ENCODE measurements at regions of chr6 and their contacts with region 1.

Region 1: GRCh38 chr6:30616811-30617564 is at the start of gene PPP1R10:
- DNase-seq: peak; percentile 100
- H3K4me3 ChIP-seq: peak within 1 kb of the TSS; percentile 70 to 99 (median 90)
- H3K27ac ChIP-seq: peak within 1 kb of the TSS; percentile 99
- H3K4me1 ChIP-seq: peaks cover 27% of the 10 kb centered on the region
- H3K27me3 ChIP-seq: no peaks in the 10 kb centered on the region
- CTCF ChIP-seq: no peak
- total RNA-seq, gene PPP1R10: 60.7 to 124 TPM

Region 2: DNA sequence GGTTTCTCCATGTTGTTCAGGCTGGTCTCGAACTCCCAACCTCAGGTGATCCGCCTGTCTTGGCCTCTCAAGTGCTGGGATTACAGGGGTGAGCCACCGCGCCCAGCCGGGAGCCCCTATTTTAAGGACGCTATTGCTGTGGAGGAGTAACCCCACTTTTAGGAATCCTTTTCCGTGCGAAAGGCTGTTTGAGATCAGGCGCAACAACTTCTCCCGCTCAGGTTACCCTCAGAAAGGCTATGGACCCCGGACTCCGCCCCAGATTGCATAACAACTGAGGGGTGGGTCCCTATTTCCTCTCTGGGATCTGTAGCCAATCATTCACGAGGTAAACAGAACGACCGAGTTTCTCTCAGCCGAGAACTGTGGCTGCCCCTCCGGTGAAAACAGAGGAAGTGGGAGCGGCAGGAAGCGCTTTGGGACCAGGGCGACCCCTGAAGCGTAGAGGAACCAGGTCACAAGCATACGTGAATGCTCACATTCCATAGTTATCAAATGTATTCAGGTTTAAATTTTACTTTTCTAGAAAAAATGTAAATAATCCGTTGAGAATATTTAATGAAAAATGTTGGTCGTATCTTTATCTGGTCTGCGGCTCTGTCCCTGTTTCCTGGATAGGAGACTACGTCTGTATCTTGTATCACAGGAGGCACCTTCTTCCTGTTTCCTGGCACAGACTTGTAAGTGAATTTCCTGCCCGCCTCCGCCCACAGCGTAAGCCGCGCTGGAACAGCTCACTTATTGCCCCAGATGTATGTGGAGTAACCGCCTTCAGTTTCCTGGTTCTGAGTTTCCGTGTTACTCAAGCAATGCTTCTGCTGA is 100.8 kb before region 1 on chr6:
- CTCF ChIA-PET with region 1: no interaction called
- dilution Hi-C with region 1: loop called (anchors 5 kb)
- in situ Hi-C with region 1: no loop called
- intact Hi-C with region 1: no loop called
- DNase-seq: peak; percentile 91
- H3K4me3 ChIP-seq: peak overlapping the region; percentile 48 to 70 (median 48)
- H3K27ac ChIP-seq: peak overlapping the region; percentile 99
- H3K4me1 ChIP-seq: peaks cover 19% of the 10 kb centered on the region
- H3K27me3 ChIP-seq: no peaks in the 10 kb centered on the region
- CTCF ChIP-seq: no peak

Region 3: DNA sequence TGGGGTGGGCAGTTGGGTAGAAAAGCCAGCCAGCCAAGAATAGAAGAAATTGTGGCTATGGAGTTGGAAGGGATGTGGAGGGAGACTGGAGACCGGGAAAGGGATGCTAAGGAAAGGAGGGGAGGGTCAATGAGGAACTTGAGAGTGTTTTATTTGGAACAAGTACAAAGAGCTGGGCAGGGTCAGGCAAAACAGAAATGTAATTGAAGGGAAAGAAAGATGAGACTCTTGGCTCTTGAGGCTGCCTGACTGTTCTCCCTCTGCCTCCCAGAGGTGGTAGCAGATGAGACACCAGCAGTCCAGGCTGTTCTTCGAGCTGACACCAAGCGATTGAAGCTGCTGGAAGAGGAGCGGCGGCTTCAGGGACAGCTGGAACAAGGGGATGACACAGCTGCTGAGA is 33.1 kb before region 1 on chr6:
- CTCF ChIA-PET with region 1: no interaction called
- dilution Hi-C with region 1: no loop called
- in situ Hi-C with region 1: no loop called
- intact Hi-C with region 1: no loop called
- DNase-seq: no peak
- H3K4me3 ChIP-seq: no peak overlapping the region
- H3K27ac ChIP-seq: no peak overlapping the region
- H3K4me1 ChIP-seq: no peaks in the 10 kb centered on the region
- H3K27me3 ChIP-seq: no peaks in the 10 kb centered on the region
- CTCF ChIP-seq: no peak

Region 4: GRCh38 chr6:30664994-30665767 is 48.2 kb after region 1 on chr6:
- CTCF ChIA-PET with region 1: no interaction called
- dilution Hi-C with region 1: loop called (anchors 5 kb)
- in situ Hi-C with region 1: no loop called
- intact Hi-C with region 1: no loop called
- DNase-seq: no peak
- H3K4me3 ChIP-seq: no peak overlapping the region
- H3K27ac ChIP-seq: no peak overlapping the region
- H3K4me1 ChIP-seq: no peaks in the 10 kb centered on the region
- H3K27me3 ChIP-seq: no peaks in the 10 kb centered on the region
- CTCF ChIP-seq: no peak

Region 5: DNA sequence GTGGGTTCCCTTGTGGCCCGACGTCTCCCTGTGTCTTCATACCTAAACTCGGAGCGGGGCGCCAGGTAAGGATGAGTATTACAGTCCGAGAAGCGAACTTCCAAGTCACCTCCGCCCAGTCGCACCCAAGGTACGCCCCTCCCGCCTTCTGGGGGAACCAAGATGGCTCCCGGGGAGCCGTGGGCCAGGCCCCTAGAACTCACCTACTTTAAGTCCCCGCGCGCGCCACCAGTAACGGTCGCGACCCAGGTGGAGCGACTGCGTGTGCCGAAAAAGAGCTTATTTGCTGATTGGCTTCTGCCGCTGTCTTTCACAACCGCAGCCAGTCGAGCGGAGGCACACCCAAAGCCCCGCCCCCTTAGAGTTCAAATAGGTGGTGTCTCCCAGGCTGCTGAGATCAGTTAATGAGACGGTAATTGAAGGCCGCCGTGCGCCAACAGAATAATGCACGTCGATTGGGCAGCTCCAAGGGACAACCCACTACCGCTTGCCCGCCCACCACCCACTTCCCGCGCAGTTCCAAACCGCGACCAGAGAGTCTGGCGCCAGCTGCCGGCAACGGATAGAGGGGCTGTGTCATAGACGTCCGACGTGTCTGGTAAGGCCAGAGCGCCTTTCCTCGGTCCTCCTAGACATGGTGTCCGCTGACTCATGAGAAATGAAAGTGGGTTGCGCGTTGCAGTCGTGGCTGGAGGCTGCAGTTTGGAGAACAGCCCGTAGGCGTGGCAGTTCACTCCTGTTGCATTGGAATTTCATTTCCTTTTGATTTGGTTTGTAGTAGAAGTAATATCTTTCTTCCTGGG is 100.3 kb after region 1 on chr6 and contains the start of gene MDC1:
- CTCF ChIA-PET with region 1: no interaction called
- dilution Hi-C with region 1: no loop called
- in situ Hi-C with region 1: no loop called
- intact Hi-C with region 1: loop called (anchors 1 kb)
- DNase-seq: peak; percentile 100
- H3K4me3 ChIP-seq: peak within 1 kb of the TSS; percentile 56 to 69 (median 61)
- H3K27ac ChIP-seq: peak within 1 kb of the TSS; percentile 78
- H3K4me1 ChIP-seq: peaks cover 33% of the 10 kb centered on the region
- H3K27me3 ChIP-seq: no peaks in the 10 kb centered on the region
- CTCF ChIP-seq: peak in 1 of 2 donors; percentile 43
- total RNA-seq, gene MDC1: 12.8 to 36.7 TPM

Region 6: DNA sequence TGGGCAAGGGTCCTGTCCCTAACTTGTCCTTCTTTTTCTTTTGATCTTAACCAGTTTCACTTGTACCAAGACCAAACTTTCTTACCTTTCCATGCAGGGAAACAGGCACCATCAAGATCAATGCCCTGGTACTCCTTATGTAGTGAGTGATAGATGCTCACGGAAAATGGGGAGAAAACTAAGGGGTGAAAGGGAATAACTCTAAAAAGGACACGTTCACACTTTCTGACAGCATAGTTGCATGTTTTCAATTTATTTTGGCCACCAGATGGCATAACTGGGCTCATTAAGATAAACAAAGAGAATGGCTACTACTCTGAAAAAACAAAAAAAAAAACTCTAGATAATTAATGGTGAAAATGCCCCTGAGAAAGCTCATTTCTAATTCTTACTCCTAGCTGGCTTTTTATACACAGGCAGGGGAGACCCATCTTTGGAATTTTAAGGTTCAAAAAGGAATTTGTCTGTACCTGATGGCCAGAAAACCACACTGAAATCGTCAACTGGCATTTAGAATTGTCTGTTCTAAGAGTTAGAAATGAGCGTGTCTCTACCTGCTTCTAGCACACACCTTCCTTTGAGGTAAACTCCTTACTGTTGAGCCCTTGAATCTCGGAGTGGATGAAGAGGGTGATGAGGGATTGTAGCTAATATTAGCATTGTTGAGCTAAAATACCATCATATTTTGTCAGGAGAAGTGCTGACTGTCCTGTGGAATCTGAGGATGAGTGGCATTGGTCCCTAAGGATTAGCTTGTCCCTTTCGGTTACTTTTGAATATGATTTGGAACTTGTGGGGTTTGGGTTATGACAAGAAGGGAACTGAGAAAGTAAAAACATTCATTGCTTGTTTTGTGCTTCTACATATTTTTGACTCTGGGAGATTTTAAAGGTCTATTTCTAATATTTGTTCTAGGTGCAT is 205.1 kb after region 1 on chr6:
- CTCF ChIA-PET with region 1: no interaction called
- dilution Hi-C with region 1: no loop called
- in situ Hi-C with region 1: no loop called
- intact Hi-C with region 1: loop called (anchors 5 kb)
- DNase-seq: peak; percentile 64
- H3K4me3 ChIP-seq: peak overlapping the region in 1 of 3 experiments; percentile 10
- H3K27ac ChIP-seq: peak overlapping the region; percentile 84
- H3K4me1 ChIP-seq: peaks cover 49% of the 10 kb centered on the region
- H3K27me3 ChIP-seq: no peaks in the 10 kb centered on the region
- CTCF ChIP-seq: peak; percentile 44 to 59

Region 7: GRCh38 chr6:30883685-30884520 is 266.9 kb after region 1 on chr6 and contains the start of gene DDR1:
- CTCF ChIA-PET with region 1: no interaction called
- dilution Hi-C with region 1: no loop called
- in situ Hi-C with region 1: no loop called
- intact Hi-C with region 1: loop called (anchors 5 kb)
- DNase-seq: peak; percentile 89
- H3K4me3 ChIP-seq: peak within 1 kb of the TSS; percentile 60 to 76 (median 73)
- H3K27ac ChIP-seq: peak within 1 kb of the TSS; percentile 95
- H3K4me1 ChIP-seq: peaks cover 58% of the 10 kb centered on the region
- H3K27me3 ChIP-seq: no peaks in the 10 kb centered on the region
- CTCF ChIP-seq: no peak
- total RNA-seq, gene DDR1: 192 to 315 TPM

Measured in mammary epithelial cell (primary cell).